IMR-90 (cell line): ENCODE measurements at regions of chr11 and their contacts with region 1.

Region 1: DNA sequence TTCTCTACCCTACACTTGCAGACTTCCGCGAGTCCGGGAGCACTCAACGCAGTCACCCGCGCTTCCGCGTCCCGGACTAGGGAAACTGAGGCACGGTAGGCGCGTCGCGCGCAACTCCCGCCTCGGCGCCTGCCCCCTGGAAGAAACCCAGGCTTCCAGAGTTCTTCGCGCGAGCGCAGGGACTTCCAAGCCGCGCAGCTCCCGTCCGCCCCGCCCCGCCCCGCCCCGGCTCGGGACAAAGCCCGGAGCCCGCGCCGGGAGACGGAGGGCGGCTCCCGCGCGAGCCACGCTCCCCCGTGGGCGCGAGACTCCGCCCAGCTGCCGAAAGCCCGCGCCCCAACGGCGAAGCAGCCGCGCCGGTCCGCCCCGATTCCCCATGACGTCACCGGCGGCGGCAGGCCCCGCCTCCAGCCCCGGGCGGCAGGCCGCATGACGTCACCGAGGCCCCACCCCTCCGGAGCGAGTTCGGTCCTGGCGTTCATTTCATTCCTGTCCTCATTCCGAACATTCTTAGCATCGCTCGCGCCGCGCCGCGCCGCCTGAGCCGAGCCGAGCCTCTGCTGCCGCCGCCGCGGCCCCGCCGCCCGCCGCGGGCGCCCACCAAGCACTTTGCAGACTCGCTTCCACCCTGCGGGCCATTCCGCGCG is at the start of gene TEAD1:
- DNase-seq: peak; percentile 95
- ATAC-seq: peak; percentile 90
- H3K4me3 ChIP-seq: peak within 1 kb of the TSS; percentile 78
- H3K27ac ChIP-seq: peak within 1 kb of the TSS; percentile 100
- H3K4me1 ChIP-seq: peaks cover 3% of the 10 kb centered on the region
- H3K27me3 ChIP-seq: no peaks in the 10 kb centered on the region
- CTCF ChIP-seq: no peak
- POLR2A ChIP-seq: peak; percentile 55
- RAD21 ChIP-seq: no peak
- total RNA-seq, gene TEAD1: 69.2 and 95.5 TPM in 2 replicates

Region 2: DNA sequence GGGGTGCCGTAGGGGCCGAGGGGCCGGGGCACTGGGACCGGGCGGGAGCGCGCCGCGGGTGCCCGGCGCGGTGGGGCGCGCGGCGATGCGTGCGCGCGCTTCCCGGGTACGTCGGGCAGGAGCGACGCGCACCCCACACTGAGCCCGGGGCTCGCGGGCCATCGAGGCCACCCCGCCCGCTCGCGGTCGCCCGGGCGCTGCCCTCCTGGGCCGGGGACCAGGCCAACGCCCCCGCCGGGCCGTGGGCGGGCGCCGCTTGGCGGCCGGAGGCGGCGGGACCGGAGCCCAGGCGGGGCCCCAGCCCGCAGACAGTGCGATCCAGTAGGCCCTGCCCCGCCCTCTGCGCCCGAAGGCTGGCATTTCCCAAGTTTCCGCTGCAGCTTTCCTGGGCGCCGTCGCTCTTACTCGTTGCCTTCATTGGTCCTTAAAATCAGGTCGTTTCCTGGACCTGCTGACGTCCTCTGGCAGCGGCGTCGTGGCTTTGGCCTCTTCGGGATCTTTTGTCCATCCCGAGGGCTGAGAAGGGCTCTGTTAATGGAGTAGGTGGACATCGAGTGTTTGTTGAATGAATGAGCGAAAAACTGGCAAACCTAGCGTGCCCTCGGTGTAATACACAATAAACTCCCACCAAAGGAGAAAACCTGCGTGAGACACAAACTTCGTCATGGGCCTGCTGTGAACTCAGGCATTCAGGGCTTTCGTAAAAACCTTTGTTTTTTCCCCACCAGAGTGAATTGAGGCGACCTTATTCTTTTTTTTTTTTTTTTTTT is 296.0 kb before region 1 on chr11:
- CTCF ChIA-PET with region 1: no interaction called
- POLR2A ChIA-PET with region 1: no interaction called
- dilution Hi-C with region 1: no loop called
- in situ Hi-C with region 1: no loop called
- intact Hi-C with region 1: loop called (anchors 1 kb)
- DNase-seq: peak; percentile 71
- ATAC-seq: peak; percentile 73
- H3K4me3 ChIP-seq: peak overlapping the region; percentile 96
- H3K27ac ChIP-seq: peak overlapping the region; percentile 100
- H3K4me1 ChIP-seq: peaks cover 15% of the 10 kb centered on the region
- H3K27me3 ChIP-seq: no peaks in the 10 kb centered on the region
- CTCF ChIP-seq: peak; percentile 36
- POLR2A ChIP-seq: peak; percentile 82
- RAD21 ChIP-seq: 0 out of 2 replicates have a peak, but pooled peaks have one; percentile 15

Region 3: GRCh38 chr11:12508151-12508751 is 165.8 kb before region 1 on chr11:
- CTCF ChIA-PET with region 1: no interaction called
- POLR2A ChIA-PET with region 1: no interaction called
- dilution Hi-C with region 1: no loop called
- in situ Hi-C with region 1: no loop called
- intact Hi-C with region 1: loop called (anchors 10 kb)
- DNase-seq: peak; percentile 75
- ATAC-seq: peak; percentile 80
- H3K4me3 ChIP-seq: no peak overlapping the region
- H3K27ac ChIP-seq: peak overlapping the region; percentile 88; the same call in 1 of the 2 replicates
- H3K4me1 ChIP-seq: peaks cover 17% of the 10 kb centered on the region
- H3K27me3 ChIP-seq: no peaks in the 10 kb centered on the region
- CTCF ChIP-seq: no peak
- POLR2A ChIP-seq: no peak
- RAD21 ChIP-seq: no peak

Region 4: GRCh38 chr11:12540913-12541582 is 133.0 kb before region 1 on chr11:
- CTCF ChIA-PET with region 1: no interaction called
- POLR2A ChIA-PET with region 1: interaction called, 5 read pairs
- dilution Hi-C with region 1: no loop called
- in situ Hi-C with region 1: no loop called
- intact Hi-C with region 1: loop called (anchors 1 kb)
- DNase-seq: peak; percentile 94
- ATAC-seq: peak; percentile 71
- H3K4me3 ChIP-seq: no peak overlapping the region
- H3K27ac ChIP-seq: peak overlapping the region; percentile 95
- H3K4me1 ChIP-seq: peaks cover 45% of the 10 kb centered on the region
- H3K27me3 ChIP-seq: no peaks in the 10 kb centered on the region
- CTCF ChIP-seq: peak; percentile 42
- POLR2A ChIP-seq: no peak; the same call in 1 of the 2 replicates
- RAD21 ChIP-seq: peak; percentile 49

Region 5: GRCh38 chr11:12556788-12557384 is 117.2 kb before region 1 on chr11:
- CTCF ChIA-PET with region 1: no interaction called
- POLR2A ChIA-PET with region 1: no interaction called
- dilution Hi-C with region 1: no loop called
- in situ Hi-C with region 1: no loop called
- intact Hi-C with region 1: loop called (anchors 5 kb)
- DNase-seq: peak; percentile 96
- ATAC-seq: peak; percentile 79
- H3K4me3 ChIP-seq: no peak overlapping the region
- H3K27ac ChIP-seq: peak overlapping the region; percentile 82
- H3K4me1 ChIP-seq: peaks cover 14% of the 10 kb centered on the region
- H3K27me3 ChIP-seq: no peaks in the 10 kb centered on the region
- CTCF ChIP-seq: no peak
- POLR2A ChIP-seq: no peak
- RAD21 ChIP-seq: peak; percentile 30; the same call in 1 of the 2 replicates

Region 6: DNA sequence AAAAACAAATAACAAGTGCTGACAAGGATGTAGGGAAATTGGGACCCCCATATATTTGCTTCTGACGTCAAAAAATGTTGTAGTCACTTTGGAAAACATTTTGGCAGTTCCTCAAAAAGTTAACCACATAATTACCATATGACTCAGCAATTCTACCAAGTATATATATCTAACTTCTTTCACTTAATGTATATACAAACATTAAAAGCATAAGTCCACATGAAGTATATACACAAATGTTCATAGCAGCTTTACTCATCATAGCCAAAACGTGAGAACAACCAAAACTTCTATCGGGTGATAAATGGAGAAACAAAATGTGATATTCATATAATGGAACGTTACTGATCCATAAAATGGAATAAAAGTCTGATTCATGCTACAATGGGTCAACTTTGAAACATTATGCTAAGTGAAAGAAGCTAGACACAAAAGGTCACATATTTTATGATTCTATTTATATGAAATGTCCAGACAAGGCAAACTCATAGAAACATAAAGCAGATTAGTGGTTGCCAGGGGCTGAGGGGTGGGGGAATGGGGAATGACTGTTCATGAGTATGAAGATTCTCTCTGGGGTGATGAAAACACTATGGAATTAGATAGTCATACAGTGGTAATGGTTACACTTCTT is 48.5 kb before region 1 on chr11:
- CTCF ChIA-PET with region 1: interaction called, 3 read pairs
- POLR2A ChIA-PET with region 1: no interaction called
- dilution Hi-C with region 1: no loop called
- in situ Hi-C with region 1: no loop called
- intact Hi-C with region 1: loop called (anchors 5 kb)
- DNase-seq: peak; percentile 98
- ATAC-seq: peak; percentile 96
- H3K4me3 ChIP-seq: no peak overlapping the region
- H3K27ac ChIP-seq: no peak overlapping the region; the same call in 1 of the 2 replicates
- H3K4me1 ChIP-seq: peaks cover 6% of the 10 kb centered on the region
- H3K27me3 ChIP-seq: no peaks in the 10 kb centered on the region; the same call in 1 of the 2 replicates
- CTCF ChIP-seq: no peak
- POLR2A ChIP-seq: no peak
- RAD21 ChIP-seq: peak; percentile 12; the same call in 1 of the 2 replicates

Region 7: DNA sequence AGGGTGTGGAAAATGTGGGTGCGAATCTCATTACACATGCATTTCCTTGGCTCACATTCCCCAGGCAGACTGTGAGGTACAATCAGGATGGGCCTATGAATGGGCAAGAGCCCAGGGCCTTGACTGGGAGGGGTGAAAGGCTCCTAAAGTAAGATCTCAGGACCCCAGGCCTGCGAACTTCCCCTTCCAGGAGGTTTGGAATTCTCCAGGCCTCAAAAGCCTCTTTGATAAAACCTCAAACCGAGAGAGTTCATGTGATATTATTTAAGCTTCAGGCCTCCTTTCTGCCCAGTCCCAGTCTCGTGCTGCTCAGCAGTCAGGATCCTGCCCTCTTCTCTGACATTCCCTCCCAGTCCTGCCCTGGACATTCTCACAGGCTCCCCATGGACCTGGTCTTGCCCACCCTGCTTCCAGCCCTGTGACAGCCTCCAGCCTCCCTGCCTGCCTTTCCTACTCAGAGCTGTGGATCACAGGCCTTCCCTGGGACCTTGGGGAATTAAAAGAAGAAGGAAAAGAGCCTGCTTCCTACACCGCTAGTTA is 37.1 kb before region 1 on chr11:
- CTCF ChIA-PET with region 1: no interaction called
- POLR2A ChIA-PET with region 1: no interaction called
- dilution Hi-C with region 1: no loop called
- in situ Hi-C with region 1: no loop called
- intact Hi-C with region 1: no loop called
- DNase-seq: no peak
- ATAC-seq: no peak
- H3K4me3 ChIP-seq: no peak overlapping the region
- H3K27ac ChIP-seq: no peak overlapping the region
- H3K4me1 ChIP-seq: peaks cover 3% of the 10 kb centered on the region; the same call in 1 of the 2 replicates
- H3K27me3 ChIP-seq: no peaks in the 10 kb centered on the region
- CTCF ChIP-seq: no peak
- POLR2A ChIP-seq: no peak
- RAD21 ChIP-seq: no peak

Region 8: DNA sequence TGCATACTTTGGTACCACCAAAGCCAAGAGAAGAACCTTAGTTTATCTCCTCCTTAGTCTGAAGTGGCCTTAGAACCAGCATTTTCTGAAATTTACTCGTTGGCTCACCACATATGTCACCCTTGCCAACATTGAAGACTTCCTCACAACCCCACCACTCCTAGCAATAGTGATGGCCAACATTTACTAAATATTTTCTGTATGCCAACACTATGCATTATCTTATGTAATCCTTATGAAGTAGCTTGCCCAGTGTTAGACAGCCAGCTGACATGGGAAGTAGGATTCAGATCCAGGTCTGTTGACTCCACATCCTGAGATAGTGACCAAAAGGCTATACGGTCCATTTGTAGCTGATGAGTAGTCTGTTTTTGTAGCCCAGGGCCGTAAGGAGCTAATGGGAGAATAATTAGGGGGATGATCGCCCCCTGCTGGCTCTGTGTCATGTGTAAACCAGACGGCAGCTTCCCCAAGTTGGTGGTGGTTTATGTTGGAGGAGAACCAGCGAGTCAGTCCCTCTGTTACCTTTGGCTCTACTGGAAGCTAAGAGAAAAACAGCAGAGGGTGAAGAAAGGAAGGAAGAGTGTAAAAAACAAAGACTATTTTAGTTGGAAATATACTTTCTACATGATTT is 214.6 kb after region 1 on chr11:
- CTCF ChIA-PET with region 1: interaction called, 7 read pairs
- POLR2A ChIA-PET with region 1: no interaction called
- dilution Hi-C with region 1: loop called (anchors 25 kb)
- in situ Hi-C with region 1: loop called (anchors 5 kb)
- intact Hi-C with region 1: loop called (anchors 2 kb)
- DNase-seq: peak; percentile 90
- ATAC-seq: peak; percentile 75
- H3K4me3 ChIP-seq: no peak overlapping the region
- H3K27ac ChIP-seq: peak overlapping the region; percentile 60; the same call in 1 of the 2 replicates
- H3K4me1 ChIP-seq: peaks cover 22% of the 10 kb centered on the region
- H3K27me3 ChIP-seq: no peaks in the 10 kb centered on the region
- CTCF ChIP-seq: peak; percentile 83
- POLR2A ChIP-seq: 0 out of 2 replicates have a peak, but pooled peaks have one; percentile 22
- RAD21 ChIP-seq: peak; percentile 81